OCI-LY7 (cell line): ENCODE measurements at regions of chr6 and their contacts with region 1.

Region 1: DNA sequence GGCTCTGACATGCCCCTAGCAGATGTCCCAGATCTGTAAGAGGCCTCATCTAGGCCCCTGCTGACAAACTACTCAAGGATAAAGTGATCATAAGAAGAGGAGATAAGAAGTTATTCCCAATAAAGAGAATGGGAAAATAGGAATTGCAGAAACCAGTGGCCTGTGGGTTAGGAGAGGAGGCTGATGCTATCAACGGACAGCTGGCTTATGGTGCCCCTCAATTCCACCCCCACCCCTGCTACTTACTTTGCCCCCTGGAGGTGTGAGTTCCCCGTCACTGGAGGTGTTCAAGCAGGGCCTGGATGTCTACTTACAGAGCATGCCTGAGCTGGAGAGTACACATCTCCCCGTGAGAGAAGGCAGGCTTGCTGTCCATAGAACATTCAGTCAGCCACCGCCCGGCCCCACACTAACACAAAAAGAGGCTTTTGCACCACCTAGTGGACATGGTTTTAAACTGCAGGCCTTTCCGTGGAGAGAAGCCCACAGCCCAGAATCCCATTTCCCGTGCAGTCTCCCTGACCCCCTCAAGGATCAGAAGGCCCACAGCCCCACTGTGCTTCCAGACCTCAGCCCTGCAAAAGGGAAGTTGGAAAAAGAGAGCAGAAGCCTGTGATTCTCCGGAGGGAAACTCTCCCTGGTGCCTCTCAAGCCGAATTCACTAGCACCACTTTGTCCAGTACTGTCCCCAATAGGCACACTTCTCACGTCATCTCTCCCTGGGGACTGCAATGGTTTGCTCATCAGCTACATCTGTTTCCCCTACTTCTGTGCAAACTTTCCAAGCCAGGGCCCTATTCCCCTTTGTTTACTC is 23.8 kb upstream of the BNIP5 start:
- DNase-seq: peak; percentile 82
- H3K4me3 ChIP-seq: no peak overlapping the region
- H3K27ac ChIP-seq: no peak overlapping the region
- H3K4me1 ChIP-seq: no peaks in the 10 kb centered on the region
- CTCF ChIP-seq: peak; percentile 90

Region 2: DNA sequence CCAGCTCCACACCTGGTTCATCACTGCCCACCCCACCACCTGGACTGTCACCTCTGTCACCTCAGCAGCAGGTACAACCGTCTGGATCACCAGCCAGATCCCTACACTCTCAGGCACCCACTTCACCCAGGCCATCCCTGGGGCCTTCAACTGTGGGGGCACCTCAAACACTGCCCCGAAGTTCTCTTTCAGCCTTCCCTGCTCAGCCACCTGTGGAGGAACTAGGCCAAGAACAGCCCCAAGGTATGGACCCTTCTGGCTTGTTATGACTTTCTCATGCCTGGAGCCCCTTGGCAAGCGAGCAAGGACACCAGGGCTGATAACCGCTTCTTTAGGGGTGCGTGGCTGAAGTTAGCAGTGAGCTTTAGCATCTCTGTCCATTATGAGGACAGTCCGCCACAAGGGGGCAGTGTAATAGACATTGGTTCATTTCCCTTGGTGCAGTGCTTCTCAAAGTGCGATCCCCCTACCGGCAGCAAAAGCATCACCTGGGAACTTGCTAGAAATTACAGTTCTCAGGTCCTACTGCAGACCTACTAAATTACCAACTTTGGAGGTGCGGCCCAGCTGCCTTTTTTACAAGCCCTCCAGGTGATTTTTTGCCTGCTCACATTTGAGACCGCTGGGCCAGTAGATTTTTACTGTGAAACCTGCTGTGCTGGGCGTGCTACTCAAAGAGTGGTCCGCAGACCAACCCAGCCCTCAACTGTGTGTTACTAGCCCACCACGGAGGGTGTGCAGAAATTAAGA is 58.0 kb before region 1 on chr6:
- CTCF ChIA-PET with region 1: no interaction called
- POLR2A ChIA-PET with region 1: interaction called, 3 read pairs
- intact Hi-C with region 1: loop called (anchors 1 kb)
- DNase-seq: peak; percentile 95
- H3K4me3 ChIP-seq: no peak overlapping the region
- H3K27ac ChIP-seq: no peak overlapping the region
- H3K4me1 ChIP-seq: peaks cover 4% of the 10 kb centered on the region
- CTCF ChIP-seq: peak; percentile 97

Region 3: GRCh38 chr6:36340618-36341454 is 19.6 kb before region 1 on chr6:
- CTCF ChIA-PET with region 1: no interaction called
- POLR2A ChIA-PET with region 1: no interaction called
- intact Hi-C with region 1: loop called (anchors 1 kb)
- DNase-seq: peak; percentile 66
- H3K4me3 ChIP-seq: no peak overlapping the region
- H3K27ac ChIP-seq: no peak overlapping the region
- H3K4me1 ChIP-seq: no peaks in the 10 kb centered on the region
- CTCF ChIP-seq: peak; percentile 96

Region 4: GRCh38 chr6:37005061-37005810 is 644.8 kb after region 1 on chr6 and contains the start of gene FGD2:
- CTCF ChIA-PET with region 1: no interaction called
- POLR2A ChIA-PET with region 1: no interaction called
- intact Hi-C with region 1: no loop called
- DNase-seq: peak; percentile 90
- H3K4me3 ChIP-seq: peak within 1 kb of the TSS; percentile 70
- H3K27ac ChIP-seq: peak within 1 kb of the TSS; percentile 70
- H3K4me1 ChIP-seq: peaks cover 65% of the 10 kb centered on the region
- CTCF ChIP-seq: no peak
- total RNA-seq, gene FGD2: 23.8 and 27.8 TPM in 2 replicates